Mammary epithelial cell (primary cell): ENCODE measurements at regions of chr6 and their contacts with region 1.

Region 1: DNA sequence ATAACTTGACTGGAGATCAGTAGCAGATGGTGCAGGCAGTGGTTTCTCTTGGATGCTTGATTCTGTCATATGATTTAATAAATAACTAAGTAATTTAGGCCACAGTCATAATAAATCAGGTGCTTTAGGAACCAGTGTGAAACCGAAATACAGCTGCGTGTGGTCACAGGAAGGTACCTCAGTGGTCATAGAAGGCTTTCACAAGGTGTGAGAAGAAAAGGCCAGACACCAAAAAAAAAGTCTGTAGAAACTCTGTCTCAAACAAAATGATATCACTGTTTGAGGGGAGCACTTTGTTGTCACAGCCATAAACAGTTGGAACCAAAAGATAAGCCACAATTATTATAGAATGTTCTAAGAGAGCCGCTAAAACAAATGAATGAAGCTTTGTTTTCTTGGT is 56.5 kb downstream of the ARMC2 start:
- DNase-seq: no peak
- H3K4me3 ChIP-seq: no peak overlapping the region
- H3K27ac ChIP-seq: no peak overlapping the region
- H3K4me1 ChIP-seq: peaks cover 5% of the 10 kb centered on the region
- H3K27me3 ChIP-seq: no peaks in the 10 kb centered on the region
- CTCF ChIP-seq: no peak

Region 2: DNA sequence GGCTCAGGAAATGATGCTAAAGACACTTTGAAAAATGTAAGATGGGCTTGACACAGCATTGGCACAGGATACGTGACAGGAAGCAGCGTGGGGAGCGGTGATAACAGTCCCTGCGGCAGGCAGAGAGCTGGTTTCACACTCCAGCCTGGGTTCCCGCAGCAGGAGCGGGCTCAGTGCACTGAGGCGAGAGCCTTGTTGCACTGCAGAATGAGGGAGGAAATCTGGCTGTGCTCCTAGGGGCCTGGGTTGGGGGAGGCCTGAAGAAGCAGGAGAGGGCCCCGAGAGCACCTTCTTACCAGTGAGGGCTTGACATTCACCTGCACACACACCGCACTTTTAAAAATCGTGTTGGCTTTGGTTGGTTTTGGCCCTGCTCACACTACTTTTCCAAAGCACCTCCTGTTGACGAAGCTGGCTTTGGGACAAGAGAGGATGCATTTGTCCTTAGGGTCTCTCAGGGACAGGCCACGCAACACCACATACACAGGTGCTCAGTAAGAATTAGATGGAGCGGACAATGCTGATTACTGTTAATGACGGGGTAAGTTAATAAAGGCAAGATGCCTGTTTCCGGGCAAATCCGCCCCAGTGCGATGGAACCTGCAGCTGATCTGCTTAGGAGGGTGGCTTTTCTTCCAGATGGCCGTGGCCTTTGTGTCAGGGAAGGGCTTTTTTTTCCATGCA is 105.9 kb before region 1 on chr6:
- CTCF ChIA-PET with region 1: no interaction called
- dilution Hi-C with region 1: no loop called
- in situ Hi-C with region 1: no loop called
- intact Hi-C with region 1: no loop called
- DNase-seq: no peak
- H3K4me3 ChIP-seq: no peak overlapping the region
- H3K27ac ChIP-seq: no peak overlapping the region
- H3K4me1 ChIP-seq: no peaks in the 10 kb centered on the region
- H3K27me3 ChIP-seq: no peaks in the 10 kb centered on the region
- CTCF ChIP-seq: no peak

Region 3: GRCh38 chr6:109059571-109060021 is 154.9 kb after region 1 on chr6:
- CTCF ChIA-PET with region 1: no interaction called
- dilution Hi-C with region 1: no loop called
- in situ Hi-C with region 1: loop called in 1 of 2 experiments (anchors 25 kb)
- intact Hi-C with region 1: loop called (anchors 5 kb)
- DNase-seq: peak; percentile 48
- H3K4me3 ChIP-seq: no peak overlapping the region
- H3K27ac ChIP-seq: no peak overlapping the region
- H3K4me1 ChIP-seq: peaks cover 12% of the 10 kb centered on the region
- H3K27me3 ChIP-seq: no peaks in the 10 kb centered on the region
- CTCF ChIP-seq: peak; percentile 30 to 35

Region 4: DNA sequence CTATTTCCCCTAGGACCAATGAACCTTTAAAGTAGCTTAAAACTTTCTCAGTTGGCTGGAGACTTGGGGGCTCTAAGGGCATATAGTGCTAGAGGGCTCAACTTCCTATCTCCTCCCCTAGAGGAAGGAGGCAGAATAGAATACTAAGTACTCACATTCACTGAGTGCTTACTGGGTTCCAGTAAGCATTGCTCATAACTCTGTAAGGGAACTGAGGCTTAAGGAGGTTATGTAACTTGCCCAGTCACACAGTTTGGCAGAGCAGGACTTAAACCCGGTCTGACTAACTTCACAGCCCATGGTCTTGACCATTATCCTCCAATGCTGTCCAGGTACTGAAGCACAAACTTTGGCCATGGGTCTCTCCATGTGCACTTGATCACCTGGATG is 177.4 kb after region 1 on chr6:
- CTCF ChIA-PET with region 1: no interaction called
- dilution Hi-C with region 1: no loop called
- in situ Hi-C with region 1: no loop called
- intact Hi-C with region 1: no loop called
- DNase-seq: peak; percentile 26
- H3K4me3 ChIP-seq: no peak overlapping the region
- H3K27ac ChIP-seq: no peak overlapping the region
- H3K4me1 ChIP-seq: no peaks in the 10 kb centered on the region
- H3K27me3 ChIP-seq: no peaks in the 10 kb centered on the region
- CTCF ChIP-seq: no peak